ENCODE measurements at regions of chr13 and their contacts with region 1.

Region 1: GRCh38 chr13:50123862-50124536 is 108.8 kb downstream of the KCNRG start:
- DNase-seq: peak; percentile 86
- ATAC-seq: peak; percentile 59
- H3K4me3 Mint-ChIP-seq: peak overlapping the region; percentile 87
- H3K27ac Mint-ChIP-seq: peak overlapping the region; percentile 95
- H3K4me1 Mint-ChIP-seq: peaks cover 64% of the 10 kb centered on the region
- H3K27me3 Mint-ChIP-seq: peaks cover 2% of the 10 kb centered on the region
- CTCF ChIP-seq: no peak

Region 2: DNA sequence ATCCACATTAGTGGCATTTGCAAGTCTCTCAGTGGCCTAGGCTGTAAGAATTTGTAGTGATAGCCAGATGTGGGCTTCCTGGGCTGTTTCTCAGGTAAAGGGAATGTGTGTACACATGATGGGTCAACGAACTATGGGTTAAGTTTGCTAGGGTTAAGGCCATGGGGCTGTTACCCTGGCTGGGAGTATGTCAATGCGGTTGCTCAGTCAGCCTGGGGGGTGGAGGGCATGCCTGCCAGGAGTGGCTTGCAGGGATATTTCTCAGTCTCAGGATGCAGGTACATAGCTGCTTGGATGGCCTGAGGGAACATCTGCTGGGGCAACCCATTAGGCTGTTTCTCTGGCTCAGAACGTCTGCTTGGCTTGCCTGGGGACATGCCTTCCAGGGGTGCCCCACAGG is 1456.8 kb before region 1 on chr13:
- CTCF ChIA-PET with region 1: no interaction called
- POLR2A ChIA-PET with region 1: no interaction called
- intact Hi-C with region 1: no loop called
- DNase-seq: no peak
- ATAC-seq: no peak
- H3K4me3 Mint-ChIP-seq: no peak overlapping the region
- H3K27ac Mint-ChIP-seq: no peak overlapping the region
- H3K4me1 Mint-ChIP-seq: no peaks in the 10 kb centered on the region
- H3K27me3 Mint-ChIP-seq: peaks cover 4% of the 10 kb centered on the region
- CTCF ChIP-seq: no peak

Region 3: DNA sequence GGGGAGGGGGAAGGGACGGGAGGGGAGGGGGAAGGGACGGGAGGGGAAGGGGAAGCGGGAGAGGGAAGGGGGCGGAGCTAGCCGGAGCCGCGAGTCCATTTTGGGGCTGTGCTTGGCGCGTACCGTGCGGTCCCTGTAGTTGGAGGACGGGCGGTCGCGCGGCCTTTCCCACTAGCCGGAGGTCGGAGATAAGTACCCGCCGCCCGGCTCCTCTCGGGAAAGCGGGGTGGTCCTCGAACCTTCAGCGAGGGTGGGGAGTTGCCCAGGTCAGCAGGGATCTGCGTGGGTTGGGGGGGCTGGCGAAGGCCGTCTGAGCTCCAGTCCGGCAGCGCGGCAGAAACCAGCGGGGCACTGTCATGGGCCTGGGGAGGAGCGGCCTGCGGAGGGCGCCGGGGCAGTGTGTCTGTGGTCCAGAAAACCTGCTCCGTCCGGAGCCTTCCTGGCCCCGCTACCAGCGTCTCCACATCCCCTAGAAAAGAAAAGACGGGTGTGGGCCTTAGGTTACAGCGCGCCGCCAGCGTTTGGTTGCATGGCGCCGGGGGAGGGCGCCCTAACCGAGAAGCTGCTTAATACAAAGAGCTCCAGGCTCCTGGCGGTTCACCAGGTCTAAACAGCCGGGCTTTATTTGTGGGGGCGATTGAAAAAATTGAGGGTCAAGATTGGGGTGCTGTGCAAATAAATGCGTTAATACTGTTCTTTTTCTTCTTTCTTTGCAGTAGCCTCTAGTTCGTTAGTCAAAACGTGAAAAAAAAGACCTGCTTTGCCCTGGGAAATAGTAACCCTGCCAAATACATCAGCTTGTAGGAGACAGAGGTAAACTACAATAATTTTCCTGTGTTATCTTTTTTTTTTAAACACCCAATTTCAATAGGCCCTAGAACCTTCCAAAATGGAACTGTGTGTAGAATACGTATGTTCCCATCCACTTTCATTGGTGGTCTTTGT is 126.8 kb before region 1 on chr13 and contains the start of gene TRIM13:
- CTCF ChIA-PET with region 1: interaction called, 21 read pairs
- POLR2A ChIA-PET with region 1: interaction called, 271 read pairs
- intact Hi-C with region 1: loop called (anchors 1 kb)
- DNase-seq: peak; percentile 82
- ATAC-seq: peak; percentile 72
- H3K4me3 Mint-ChIP-seq: peak within 1 kb of the TSS; percentile 88
- H3K27ac Mint-ChIP-seq: peak within 1 kb of the TSS; percentile 93
- H3K4me1 Mint-ChIP-seq: peaks cover 54% of the 10 kb centered on the region
- H3K27me3 Mint-ChIP-seq: no peaks in the 10 kb centered on the region
- CTCF ChIP-seq: peak; percentile 49
- total RNA-seq, gene TRIM13: 49.3 and 54.4 TPM in 2 replicates

Region 4: GRCh38 chr13:50158385-50159165 is 34.6 kb after region 1 on chr13:
- CTCF ChIA-PET with region 1: no interaction called
- POLR2A ChIA-PET with region 1: interaction called, 34 read pairs
- intact Hi-C with region 1: no loop called
- DNase-seq: no peak
- ATAC-seq: peak; percentile 64
- H3K4me3 Mint-ChIP-seq: peak overlapping the region; percentile 64
- H3K27ac Mint-ChIP-seq: peak overlapping the region; percentile 78
- H3K4me1 Mint-ChIP-seq: peaks cover 31% of the 10 kb centered on the region
- H3K27me3 Mint-ChIP-seq: no peaks in the 10 kb centered on the region
- CTCF ChIP-seq: no peak

Region 5: DNA sequence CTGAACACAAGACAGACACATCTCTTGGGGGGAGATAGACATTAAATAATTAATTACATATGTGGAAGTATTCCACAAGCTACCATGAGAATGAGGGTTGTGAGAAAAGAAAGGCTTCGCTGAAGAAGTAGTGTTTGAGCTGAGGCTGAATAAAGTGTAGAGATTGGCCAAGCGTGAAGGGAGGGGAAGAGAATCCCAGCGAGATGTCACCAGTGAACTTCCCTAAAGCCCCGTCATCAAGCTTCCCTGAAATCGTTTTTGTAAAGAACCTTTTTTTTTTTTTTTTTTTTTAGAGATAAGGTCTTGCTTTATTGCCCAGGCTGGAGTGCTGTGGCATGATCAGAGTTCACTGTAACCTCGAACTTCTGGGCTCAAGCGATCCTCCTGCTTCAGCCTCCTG is 126.4 kb after region 1 on chr13:
- CTCF ChIA-PET with region 1: interaction called, 4 read pairs
- POLR2A ChIA-PET with region 1: interaction called, 136 read pairs
- intact Hi-C with region 1: no loop called
- DNase-seq: no peak
- ATAC-seq: no peak
- H3K4me3 Mint-ChIP-seq: no peak overlapping the region
- H3K27ac Mint-ChIP-seq: no peak overlapping the region
- H3K4me1 Mint-ChIP-seq: peaks cover 27% of the 10 kb centered on the region
- H3K27me3 Mint-ChIP-seq: no peaks in the 10 kb centered on the region
- CTCF ChIP-seq: no peak

Region 6: DNA sequence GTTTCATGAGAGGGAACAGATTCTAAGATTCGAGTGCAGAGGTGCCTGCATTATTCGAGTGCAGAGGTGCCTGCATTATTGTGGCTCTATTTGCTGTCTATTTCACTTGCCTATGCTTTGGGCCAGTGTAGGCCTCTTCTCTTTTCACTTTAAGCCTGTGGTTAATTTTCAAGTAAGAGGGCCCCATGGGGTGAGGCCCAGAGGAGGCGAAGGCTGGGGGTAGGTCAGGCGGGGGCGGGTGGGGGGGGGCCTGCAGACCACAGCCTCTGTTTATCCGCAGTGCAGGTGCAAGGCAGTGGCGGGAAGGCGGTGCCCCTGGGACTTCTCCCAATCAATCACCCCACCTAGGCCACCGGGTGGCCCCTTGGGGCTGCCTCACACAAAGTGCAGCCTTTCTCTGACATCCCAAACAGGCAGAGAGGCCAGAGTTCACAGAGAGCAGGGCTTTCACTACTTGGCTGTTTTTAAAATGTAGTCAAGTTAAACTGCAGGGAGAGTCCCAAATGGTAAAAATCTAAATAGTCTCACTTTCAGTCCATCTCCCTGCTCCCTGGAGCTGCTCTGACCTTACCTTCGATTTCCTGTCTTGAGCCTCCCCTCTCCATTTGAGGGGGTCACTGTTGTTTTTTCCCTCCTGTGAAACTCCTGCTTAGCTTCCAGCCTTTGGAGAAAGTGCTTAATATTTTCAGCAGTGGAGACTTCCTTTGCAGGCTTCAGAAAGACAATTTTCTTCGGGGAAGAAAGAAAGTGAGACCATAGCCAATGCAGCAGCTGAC is 470.5 kb after region 1 on chr13:
- CTCF ChIA-PET with region 1: no interaction called
- POLR2A ChIA-PET with region 1: interaction called, 39 read pairs
- intact Hi-C with region 1: loop called (anchors 1 kb)
- DNase-seq: peak; percentile 76
- ATAC-seq: peak; percentile 88
- H3K4me3 Mint-ChIP-seq: peak overlapping the region; percentile 73
- H3K27ac Mint-ChIP-seq: peak overlapping the region; percentile 98
- H3K4me1 Mint-ChIP-seq: peaks cover 95% of the 10 kb centered on the region
- H3K27me3 Mint-ChIP-seq: no peaks in the 10 kb centered on the region
- CTCF ChIP-seq: no peak

Region 7: DNA sequence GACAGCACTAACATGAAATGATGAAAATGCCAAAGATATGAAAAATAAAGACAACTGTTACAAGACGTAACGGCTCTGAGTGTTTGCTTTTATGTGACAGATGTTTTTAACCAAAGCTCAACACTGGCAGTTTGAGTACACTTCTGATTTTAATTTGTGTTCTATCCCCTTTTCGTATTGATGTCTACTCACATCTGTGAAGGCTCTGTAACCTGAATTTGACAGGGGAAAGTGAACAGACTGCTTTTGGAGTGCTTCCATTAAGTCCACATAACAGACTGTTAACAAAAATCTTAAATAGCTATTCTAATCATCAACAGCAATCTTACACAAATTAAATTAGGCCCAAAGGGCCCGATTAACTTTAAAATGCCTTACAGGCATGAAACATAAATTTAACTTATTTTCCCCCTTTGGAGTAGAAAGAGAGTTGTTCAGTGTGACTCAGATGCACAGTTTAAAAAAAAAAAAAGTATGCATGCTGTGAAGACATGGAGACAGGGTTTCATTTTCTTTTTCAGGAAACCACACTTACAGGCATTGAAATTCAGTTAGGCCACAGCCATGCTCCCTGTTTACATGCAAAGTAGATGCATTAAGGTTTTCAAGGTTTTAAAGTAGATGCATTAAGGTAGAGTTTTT is 769.3 kb after region 1 on chr13:
- CTCF ChIA-PET with region 1: no interaction called
- POLR2A ChIA-PET with region 1: interaction called, 21 read pairs
- intact Hi-C with region 1: no loop called
- DNase-seq: no peak
- ATAC-seq: peak; percentile 79
- H3K4me3 Mint-ChIP-seq: peak overlapping the region; percentile 78
- H3K27ac Mint-ChIP-seq: peak overlapping the region; percentile 96
- H3K4me1 Mint-ChIP-seq: peaks cover 65% of the 10 kb centered on the region
- H3K27me3 Mint-ChIP-seq: no peaks in the 10 kb centered on the region
- CTCF ChIP-seq: no peak